ENCODE measurements at regions of chrX and their contacts with region 1.

Region 1: GRCh38 chrX:149757206-149758067 is 16.4 kb upstream of the HSFX1 start:
- DNase-seq: no peak
- ATAC-seq: no peak
- H3K4me3 ChIP-seq: no peak overlapping the region
- H3K27ac ChIP-seq: no peak overlapping the region
- H3K4me1 ChIP-seq: no peaks in the 10 kb centered on the region
- H3K27me3 ChIP-seq: peaks cover 0 to 12% (median 0%) of the 10 kb centered on the region in 4 donors
- CTCF ChIP-seq: no peak

Region 2: DNA sequence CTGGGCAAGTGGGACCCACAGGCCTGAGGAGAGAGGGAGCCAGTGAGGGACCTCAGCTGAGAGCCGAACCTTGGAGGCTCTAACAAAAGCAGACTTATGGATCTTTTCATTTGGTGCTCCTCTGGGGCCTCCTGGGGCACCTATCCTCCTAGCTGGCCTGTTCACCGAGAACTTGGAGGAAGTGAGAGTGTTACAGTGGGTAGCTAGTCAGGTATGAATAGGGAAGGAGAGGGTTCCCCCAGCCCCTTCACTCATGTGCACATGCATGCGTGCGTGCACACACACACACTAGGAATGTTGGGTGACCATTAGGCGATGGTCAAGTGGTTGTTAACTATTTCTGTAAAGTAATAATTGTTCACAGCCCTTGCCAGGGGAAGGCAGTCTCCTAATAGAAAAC is 107.3 kb before region 1 on chrX:
- intact Hi-C with region 1: loop called in 1 of 3 experiments (anchors 10 kb)
- DNase-seq: no peak
- ATAC-seq: no peak
- H3K4me3 ChIP-seq: no peak overlapping the region
- H3K27ac ChIP-seq: no peak overlapping the region
- H3K4me1 ChIP-seq: no peaks in the 10 kb centered on the region
- H3K27me3 ChIP-seq: no peaks in the 10 kb centered on the region
- CTCF ChIP-seq: no peak

Measured in pancreas (tissue), 10 donors.